H1 (cell line): ENCODE measurements at regions of chr1 and their contacts with region 1.

Region 1: GRCh38 chr1:205523891-205524793 is 19.7 kb downstream of the CDK18 start:
- DNase-seq: peak; percentile 63 to 94
- H3K4me3 ChIP-seq: no peak overlapping the region
- H3K27ac ChIP-seq: no peak overlapping the region
- H3K4me1 ChIP-seq: peaks cover under 1 to 27% (median 12%) of the 10 kb centered on the region in 4 experiments
- H3K27me3 ChIP-seq: no peaks in the 10 kb centered on the region
- CTCF ChIP-seq: peak; percentile 73 to 94 (median 93)
- EP300 ChIP-seq: no peak
- POLR2A ChIP-seq: no peak
- RAD21 ChIP-seq: peak; percentile 96 to 97

Region 2: DNA sequence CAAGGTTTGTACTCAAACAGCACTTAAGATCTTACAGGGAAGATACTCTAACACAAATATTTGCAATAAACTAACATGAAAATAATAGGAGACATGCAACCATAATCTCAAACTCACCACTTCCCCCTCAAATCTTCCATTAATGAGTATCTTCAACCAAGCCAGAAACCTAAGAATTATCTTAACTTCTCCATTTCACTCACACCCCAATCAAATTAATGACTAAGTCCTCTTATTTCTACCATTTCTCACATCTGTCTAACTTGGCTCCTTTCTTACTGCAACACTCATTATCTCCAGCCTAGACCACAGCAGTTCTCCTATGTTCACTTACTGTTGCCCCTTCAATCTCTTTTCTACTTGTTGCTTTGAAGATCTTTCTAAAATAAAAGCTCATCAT is 412.8 kb before region 1 on chr1:
- CTCF ChIA-PET with region 1: no interaction called
- POLR2A ChIA-PET with region 1: no interaction called
- DNase-seq: no peak
- H3K4me3 ChIP-seq: no peak overlapping the region
- H3K27ac ChIP-seq: no peak overlapping the region
- H3K4me1 ChIP-seq: no peaks in the 10 kb centered on the region; a peak in 1 of 7 replicates
- H3K27me3 ChIP-seq: no peaks in the 10 kb centered on the region
- CTCF ChIP-seq: no peak
- EP300 ChIP-seq: no peak
- POLR2A ChIP-seq: no peak
- RAD21 ChIP-seq: no peak

Region 3: GRCh38 chr1:205344066-205344928 is 179.8 kb before region 1 on chr1:
- CTCF ChIA-PET with region 1: interaction called, 14 read pairs
- POLR2A ChIA-PET with region 1: no interaction called
- DNase-seq: peak in 1 of 2 experiments; percentile 72
- H3K4me3 ChIP-seq: peak overlapping the region; percentile 52 to 70 (median 56)
- H3K27ac ChIP-seq: no peak overlapping the region
- H3K4me1 ChIP-seq: peaks cover 5 to 10% (median 8%) of the 10 kb centered on the region in 4 experiments
- H3K27me3 ChIP-seq: peaks cover 11 to 30% (median 29%) of the 10 kb centered on the region in 4 experiments
- CTCF ChIP-seq: no peak
- EP300 ChIP-seq: no peak
- POLR2A ChIP-seq: no peak
- RAD21 ChIP-seq: no peak

Region 4: DNA sequence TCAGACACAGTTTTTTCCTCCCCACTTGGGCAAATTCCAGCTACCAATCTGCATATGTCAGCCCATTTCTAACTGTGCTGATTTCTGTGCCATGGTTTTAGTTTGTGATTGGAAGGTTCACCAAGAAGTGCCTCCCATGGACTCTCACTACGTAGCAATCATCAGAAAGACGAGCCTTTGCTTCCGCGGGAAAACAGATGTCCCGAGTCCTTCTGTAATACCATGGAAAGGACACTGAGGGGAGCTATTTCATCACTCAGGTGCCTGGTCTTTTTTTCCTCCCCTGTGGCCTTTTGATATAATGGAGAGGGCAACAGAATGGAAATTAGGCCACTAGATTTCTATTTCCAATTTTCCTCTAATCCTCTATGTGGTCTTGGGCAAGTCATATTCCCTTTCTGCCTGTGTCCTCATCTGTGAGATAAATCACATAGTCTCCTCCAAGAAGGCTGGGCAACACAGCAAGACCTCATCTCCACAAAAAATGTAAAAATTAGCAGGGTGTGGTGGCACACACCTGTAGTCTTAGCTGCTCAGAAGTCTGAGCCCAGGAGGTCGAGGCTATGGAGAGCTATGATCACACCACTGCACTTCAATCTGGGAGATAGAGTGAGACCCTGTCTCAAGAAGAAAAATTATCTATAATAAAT is 127.0 kb before region 1 on chr1:
- CTCF ChIA-PET with region 1: interaction called, 98 read pairs
- POLR2A ChIA-PET with region 1: interaction called, 3 read pairs
- DNase-seq: no peak
- H3K4me3 ChIP-seq: no peak overlapping the region
- H3K27ac ChIP-seq: no peak overlapping the region
- H3K4me1 ChIP-seq: no peaks in the 10 kb centered on the region
- H3K27me3 ChIP-seq: no peaks in the 10 kb centered on the region
- CTCF ChIP-seq: peak; percentile 27 to 93 (median 90)
- EP300 ChIP-seq: 0 out of 3 replicates have a peak, but pooled peaks of 1 of the 2 experiments have one; percentile 20
- POLR2A ChIP-seq: no peak
- RAD21 ChIP-seq: peak; percentile 99 to 100

Region 5: GRCh38 chr1:205440476-205441317 is 83.4 kb before region 1 on chr1:
- CTCF ChIA-PET with region 1: interaction called, 27 read pairs
- POLR2A ChIA-PET with region 1: no interaction called
- DNase-seq: peak in 1 of 2 experiments; percentile 65
- H3K4me3 ChIP-seq: no peak overlapping the region
- H3K27ac ChIP-seq: no peak overlapping the region
- H3K4me1 ChIP-seq: peaks cover 40 to 69% (median 53%) of the 10 kb centered on the region in 4 experiments
- H3K27me3 ChIP-seq: peaks cover 0 to 10% (median 4%) of the 10 kb centered on the region in 4 experiments; a peak in 1 of 7 replicates
- CTCF ChIP-seq: no peak
- EP300 ChIP-seq: no peak
- POLR2A ChIP-seq: 0 out of 3 replicates have a peak, but pooled peaks of 1 of the 2 experiments have one; percentile 17
- RAD21 ChIP-seq: no peak

Region 6: GRCh38 chr1:205485338-205486228 is 38.6 kb before region 1 on chr1:
- CTCF ChIA-PET with region 1: interaction called, 1,626 read pairs
- POLR2A ChIA-PET with region 1: interaction called, 14 read pairs
- DNase-seq: peak; percentile 67 to 90
- H3K4me3 ChIP-seq: peak overlapping the region in 1 of 4 experiments; percentile 28; a peak in 1 of 8 replicates
- H3K27ac ChIP-seq: no peak overlapping the region
- H3K4me1 ChIP-seq: peaks cover 0 to 16% (median 8%) of the 10 kb centered on the region in 4 experiments; a peak in 6 of 7 replicates
- H3K27me3 ChIP-seq: peaks cover 0 to 11% (median 4%) of the 10 kb centered on the region in 4 experiments; a peak in 4 of 7 replicates
- CTCF ChIP-seq: peak; percentile 96 to 98 (median 97)
- EP300 ChIP-seq: peak in 1 of 2 experiments; percentile 53; a peak in 1 of 3 replicates
- POLR2A ChIP-seq: no peak
- RAD21 ChIP-seq: peak; percentile 96 to 99

Region 7: DNA sequence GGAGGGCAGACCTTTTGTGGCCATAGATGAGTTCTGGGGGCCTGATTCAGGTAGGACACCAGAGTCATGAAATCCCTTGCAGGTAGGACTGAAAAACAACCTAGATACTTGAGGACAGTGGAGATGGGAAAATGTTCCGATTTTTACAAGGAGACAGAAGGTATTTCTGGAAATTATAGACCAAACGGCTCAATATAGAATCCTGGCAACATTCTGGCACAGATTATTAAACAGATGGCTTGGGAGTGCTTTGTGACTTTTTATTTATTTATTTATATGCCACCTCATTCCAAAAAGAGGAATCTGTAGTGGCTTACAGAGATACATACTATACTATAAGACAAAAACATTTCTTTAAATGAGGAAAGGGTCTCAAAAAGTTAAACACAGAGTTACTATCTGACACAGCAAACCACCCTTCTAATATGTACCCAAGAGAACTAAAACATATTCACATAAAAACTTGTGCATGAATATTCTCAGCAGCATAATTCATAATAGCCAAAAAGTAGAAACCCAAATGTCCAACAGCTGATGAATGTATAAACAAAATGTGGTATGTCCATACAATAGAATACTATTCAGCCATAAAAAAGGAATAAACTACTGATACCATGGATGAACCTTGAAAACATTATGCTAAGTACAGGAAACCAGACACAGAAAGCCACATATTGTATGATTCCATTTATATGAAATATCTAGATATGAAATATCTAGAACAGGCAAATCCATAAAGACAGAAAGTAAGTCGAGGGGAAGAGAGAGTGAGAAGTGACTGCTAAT is 30.1 kb after region 1 on chr1:
- CTCF ChIA-PET with region 1: interaction called, 24 read pairs
- POLR2A ChIA-PET with region 1: no interaction called
- DNase-seq: no peak
- H3K4me3 ChIP-seq: no peak overlapping the region
- H3K27ac ChIP-seq: no peak overlapping the region
- H3K4me1 ChIP-seq: no peaks in the 10 kb centered on the region
- H3K27me3 ChIP-seq: 0 out of 7 replicates have a peak, but pooled peaks cover 0 to 2% (median 0%) of the 10 kb centered on the region in 4 experiments
- CTCF ChIP-seq: no peak
- EP300 ChIP-seq: no peak
- POLR2A ChIP-seq: no peak
- RAD21 ChIP-seq: no peak

Region 8: DNA sequence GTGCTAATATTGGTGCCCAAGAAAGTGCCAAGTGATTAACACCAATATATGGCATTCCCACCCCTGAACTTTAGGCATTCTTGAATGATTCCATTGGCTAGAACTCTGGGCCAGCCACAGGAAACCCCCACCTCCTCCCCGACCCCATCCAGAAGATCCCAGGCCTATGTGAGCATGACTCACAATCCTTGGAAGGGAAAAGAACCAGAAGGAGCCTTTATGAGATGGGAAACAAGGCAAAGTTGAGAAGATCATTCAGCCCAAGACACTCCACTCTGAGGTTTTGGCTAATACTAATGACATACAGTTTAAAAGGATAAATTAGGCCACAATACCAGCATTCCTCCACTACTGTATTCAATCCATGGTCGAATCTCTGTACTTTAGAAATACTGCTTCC is 85.9 kb after region 1 on chr1:
- CTCF ChIA-PET with region 1: no interaction called
- POLR2A ChIA-PET with region 1: no interaction called
- DNase-seq: no peak
- H3K4me3 ChIP-seq: no peak overlapping the region
- H3K27ac ChIP-seq: no peak overlapping the region
- H3K4me1 ChIP-seq: no peaks in the 10 kb centered on the region
- H3K27me3 ChIP-seq: peaks cover 0 to 2% (median 0%) of the 10 kb centered on the region in 4 experiments; a peak in 1 of 7 replicates
- CTCF ChIP-seq: no peak
- EP300 ChIP-seq: no peak
- POLR2A ChIP-seq: no peak
- RAD21 ChIP-seq: no peak

Region 9: GRCh38 chr1:205896320-205896719 is 372.2 kb after region 1 on chr1:
- CTCF ChIA-PET with region 1: no interaction called
- POLR2A ChIA-PET with region 1: no interaction called
- DNase-seq: no peak
- H3K4me3 ChIP-seq: no peak overlapping the region
- H3K27ac ChIP-seq: no peak overlapping the region
- H3K4me1 ChIP-seq: no peaks in the 10 kb centered on the region; a peak in 1 of 7 replicates
- H3K27me3 ChIP-seq: no peaks in the 10 kb centered on the region
- CTCF ChIP-seq: no peak
- EP300 ChIP-seq: no peak
- POLR2A ChIP-seq: no peak
- RAD21 ChIP-seq: no peak